Spleen (tissue), 13 donors: ENCODE measurements at regions of chrX and their contacts with region 1.

Region 1: GRCh38 chrX:152632445-152633097 is 5.1 kb upstream of the GABRQ start:
- DNase-seq: no peak
- H3K4me3 ChIP-seq: no peak overlapping the region
- H3K27ac ChIP-seq: no peak overlapping the region
- H3K4me1 ChIP-seq: peaks cover 0 to 2% (median 0%) of the 10 kb centered on the region in 6 donors
- H3K27me3 ChIP-seq: peaks cover 0 to 20% (median 12%) of the 10 kb centered on the region in 7 donors
- CTCF ChIP-seq: peak; percentile 23 to 78 (median 68)
- POLR2A ChIP-seq: no peak

Region 2: DNA sequence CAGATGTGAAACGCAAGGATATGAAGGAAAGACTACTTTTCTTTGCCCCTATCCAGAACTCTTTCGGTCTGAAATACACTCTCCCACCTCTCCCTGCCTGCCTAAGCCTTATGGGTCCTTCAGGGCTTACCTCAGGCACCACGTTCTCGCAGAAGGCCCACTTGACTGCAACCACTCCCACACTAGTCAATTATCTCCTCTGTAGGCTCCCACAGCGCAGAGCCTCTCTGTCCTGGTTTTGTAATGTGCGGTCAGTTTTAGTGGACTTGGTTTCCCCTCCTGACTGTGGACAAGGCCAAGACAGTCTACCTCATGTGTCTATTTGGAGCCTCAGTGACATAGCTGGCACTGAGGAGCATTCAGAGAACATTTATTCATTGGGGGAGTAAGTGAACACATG is 886.9 kb before region 1 on chrX:
- intact Hi-C with region 1: loop called (anchors 5 kb)
- DNase-seq: peak; percentile 36
- H3K4me3 ChIP-seq: no peak overlapping the region
- H3K27ac ChIP-seq: no peak overlapping the region
- H3K4me1 ChIP-seq: no peaks in the 10 kb centered on the region
- H3K27me3 ChIP-seq: peaks cover 0 to 8% (median 0%) of the 10 kb centered on the region in 7 donors
- CTCF ChIP-seq: no peak
- POLR2A ChIP-seq: no peak

Region 3: DNA sequence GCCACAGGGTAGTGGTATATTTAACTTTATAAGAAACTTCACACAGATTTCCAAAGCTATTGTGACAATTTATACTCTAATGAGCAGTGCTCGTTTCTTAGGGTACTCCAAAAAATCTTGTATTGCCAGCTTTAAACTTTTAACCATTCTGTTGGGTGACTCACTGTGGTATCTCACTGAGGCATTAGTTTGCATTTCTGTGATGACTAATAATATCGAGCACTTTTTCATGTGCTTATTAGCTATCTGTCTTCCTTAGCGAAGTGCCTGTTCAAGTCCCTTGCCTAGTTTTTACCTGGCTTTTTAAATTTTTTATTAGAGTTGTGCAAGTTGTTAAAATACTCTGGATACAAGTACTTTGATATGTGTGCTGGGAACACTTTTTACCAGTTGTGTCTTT is 429.2 kb after region 1 on chrX:
- intact Hi-C with region 1: no loop called
- DNase-seq: no peak
- H3K4me3 ChIP-seq: no peak overlapping the region
- H3K27ac ChIP-seq: no peak overlapping the region
- H3K4me1 ChIP-seq: peaks cover 0 to 4% (median 0%) of the 10 kb centered on the region in 6 donors
- H3K27me3 ChIP-seq: peaks cover 0 to 15% (median 13%) of the 10 kb centered on the region in 7 donors
- CTCF ChIP-seq: no peak
- POLR2A ChIP-seq: no peak

Region 4: GRCh38 chrX:153400146-153401127 is 767.9 kb after region 1 on chrX:
- intact Hi-C with region 1: no loop called
- DNase-seq: peak; percentile 82
- H3K4me3 ChIP-seq: no peak overlapping the region
- H3K27ac ChIP-seq: no peak overlapping the region
- H3K4me1 ChIP-seq: no peaks in the 10 kb centered on the region
- H3K27me3 ChIP-seq: peaks cover 0 to 17% (median 0%) of the 10 kb centered on the region in 7 donors
- CTCF ChIP-seq: peak in 10 of 11 experiments; percentile 18 to 77 (median 56)
- POLR2A ChIP-seq: no peak